Heart right ventricle (tissue), 16 donors: ENCODE measurements at regions of chr13 and their contacts with region 1.

Region 1: GRCh38 chr13:67084066-67084465 is 146.1 kb downstream of the PCDH9 start:
- DNase-seq: no peak
- ATAC-seq: peak in 6 of 8 donors; percentile 34 to 71 (median 58)
- H3K4me3 ChIP-seq: no peak overlapping the region
- H3K27ac ChIP-seq: peak overlapping the region in 3 of 10 donors; percentile 34 to 52 (median 35)
- H3K4me1 ChIP-seq: peaks cover 0 to 24% (median 5%) of the 10 kb centered on the region in 9 donors
- H3K27me3 ChIP-seq: no peaks in the 10 kb centered on the region
- CTCF ChIP-seq: no peak

Region 2: GRCh38 chr13:67147342-67148133 is 63.5 kb after region 1 on chr13:
- intact Hi-C with region 1: loop called in 2 of 10 experiments (anchors 5 kb)
- DNase-seq: peak in 1 of 2 donors; percentile 15
- ATAC-seq: peak; percentile 71 to 94 (median 87)
- H3K4me3 ChIP-seq: peak overlapping the region in 6 of 10 donors; percentile 4 to 29 (median 21)
- H3K27ac ChIP-seq: peak overlapping the region; percentile 38 to 85 (median 76)
- H3K4me1 ChIP-seq: peaks cover 0 to 54% (median 31%) of the 10 kb centered on the region in 9 donors
- H3K27me3 ChIP-seq: no peaks in the 10 kb centered on the region
- CTCF ChIP-seq: no peak